ENCODE measurements at regions of chr6 and their contacts with region 1.

Region 1: DNA sequence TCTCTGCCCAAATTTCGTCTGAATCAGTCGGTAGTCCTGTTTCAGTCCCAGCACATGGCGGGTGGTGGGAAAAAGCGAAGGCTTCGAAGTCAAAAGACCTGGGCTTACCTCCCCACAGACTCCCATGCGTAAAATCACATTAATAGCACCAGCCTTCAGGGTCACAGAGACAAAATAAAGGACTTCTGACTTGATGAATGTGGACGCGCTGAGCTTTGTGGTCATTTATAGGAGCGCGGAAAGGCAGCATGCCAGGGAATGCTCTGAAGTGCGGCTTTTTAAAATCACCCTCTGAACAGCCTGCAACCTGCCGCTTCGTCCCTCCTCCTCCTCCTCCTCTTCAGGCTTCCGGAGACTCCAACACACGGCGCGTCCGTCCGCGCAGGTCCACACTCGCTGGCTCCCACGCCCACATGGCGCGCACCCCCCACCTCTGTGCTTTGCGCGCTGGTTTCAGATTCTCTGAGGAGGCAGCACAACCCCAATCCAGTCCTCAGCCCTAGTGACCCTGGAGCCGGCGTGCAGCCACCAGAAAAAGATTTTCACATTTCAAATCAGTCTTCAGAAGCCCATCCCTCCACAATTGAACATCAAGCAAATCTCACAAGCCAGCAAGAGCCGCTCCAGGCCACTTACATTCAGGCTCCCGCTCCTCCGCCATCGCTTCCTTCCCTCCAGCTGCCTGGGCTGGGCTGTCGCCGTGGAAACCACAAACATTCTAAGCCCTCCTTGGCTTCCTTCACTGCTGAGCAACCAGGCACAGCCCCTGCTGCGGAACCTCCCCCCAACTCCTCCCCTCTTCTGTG is at the start of gene C6orf118:
- DNase-seq: peak; percentile 58
- H3K4me3 ChIP-seq: peak within 1 kb of the TSS in 2 of 3 experiments; percentile 17 to 21
- H3K27ac ChIP-seq: no peak within 1 kb of the TSS
- H3K4me1 ChIP-seq: no peaks in the 10 kb centered on the region
- H3K27me3 ChIP-seq: no peaks in the 10 kb centered on the region
- CTCF ChIP-seq: no peak
- POLR2A ChIP-seq: no peak
- total RNA-seq, gene C6orf118: not detected in 2 replicates

Region 2: GRCh38 chr6:165766457-165766856 is 457.3 kb after region 1 on chr6:
- CTCF ChIA-PET with region 1: no interaction called
- POLR2A ChIA-PET with region 1: no interaction called
- dilution Hi-C with region 1: no loop called
- intact Hi-C with region 1: loop called (anchors 5 kb)
- DNase-seq: peak; percentile 97
- H3K4me3 ChIP-seq: peak overlapping the region in 1 of 3 experiments; percentile 11
- H3K27ac ChIP-seq: peak overlapping the region; percentile 98
- H3K4me1 ChIP-seq: peaks cover 44% of the 10 kb centered on the region
- H3K27me3 ChIP-seq: no peaks in the 10 kb centered on the region
- CTCF ChIP-seq: no peak
- POLR2A ChIP-seq: no peak

Measured in endothelial cell of umbilical vein (primary cell).